PC-3 (cell line): ENCODE measurements at regions of chr3 and their contacts with region 1.

Region 1: GRCh38 chr3:123884203-123884831 is at the start of gene MYLK:
- DNase-seq: peak; percentile 85
- ATAC-seq: peak; percentile 92
- H3K4me3 ChIP-seq: peak within 1 kb of the TSS; percentile 81
- H3K27ac ChIP-seq: no peak within 1 kb of the TSS
- H3K4me1 ChIP-seq: peaks cover 8% of the 10 kb centered on the region
- H3K27me3 ChIP-seq: no peaks in the 10 kb centered on the region
- CTCF ChIP-seq: no peak
- total RNA-seq, gene MYLK: 6.9 and 8.7 TPM in 2 replicates

Region 2: GRCh38 chr3:123535580-123535979 is 348.7 kb before region 1 on chr3:
- CTCF ChIA-PET with region 1: no interaction called
- POLR2A ChIA-PET with region 1: no interaction called
- intact Hi-C with region 1: no loop called
- DNase-seq: peak; percentile 58
- ATAC-seq: peak; percentile 91
- H3K4me3 ChIP-seq: no peak overlapping the region
- H3K27ac ChIP-seq: no peak overlapping the region
- H3K4me1 ChIP-seq: peaks cover 15% of the 10 kb centered on the region
- H3K27me3 ChIP-seq: no peaks in the 10 kb centered on the region
- CTCF ChIP-seq: no peak

Region 3: DNA sequence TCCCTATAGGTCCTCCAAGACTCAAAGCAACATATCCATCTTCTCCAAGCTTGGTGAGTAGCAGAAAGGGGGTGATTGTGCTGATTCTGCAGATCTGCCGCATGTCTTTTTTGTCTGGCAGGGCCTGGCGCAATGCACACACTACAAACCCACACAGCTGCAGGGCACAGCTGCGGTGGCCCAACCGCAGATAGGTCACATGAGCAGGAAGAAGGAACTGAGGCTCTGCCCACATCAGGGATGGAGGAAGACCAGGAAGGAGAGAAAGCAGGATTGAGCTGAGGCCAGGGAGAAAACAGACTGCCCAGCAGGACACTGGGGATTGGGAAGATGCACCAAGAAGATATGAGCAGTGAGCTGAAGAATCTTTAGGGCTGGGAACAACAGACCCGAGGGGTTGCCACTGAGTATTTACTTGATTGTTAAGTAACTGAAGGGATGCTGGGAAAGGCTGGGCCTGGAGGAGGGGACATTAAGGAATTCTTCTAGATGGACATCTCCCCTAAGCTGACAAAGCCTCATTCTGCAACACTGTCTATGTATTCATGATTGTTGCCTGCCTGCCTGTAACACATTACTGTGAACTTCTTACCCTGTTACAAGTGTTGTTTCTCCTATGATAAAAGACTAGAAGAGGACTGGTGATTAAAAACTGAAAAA is 126.9 kb before region 1 on chr3:
- CTCF ChIA-PET with region 1: no interaction called
- POLR2A ChIA-PET with region 1: no interaction called
- intact Hi-C with region 1: loop called (anchors 5 kb)
- DNase-seq: no peak
- ATAC-seq: peak; percentile 7
- H3K4me3 ChIP-seq: no peak overlapping the region
- H3K27ac ChIP-seq: no peak overlapping the region
- H3K4me1 ChIP-seq: peaks cover 26% of the 10 kb centered on the region
- H3K27me3 ChIP-seq: no peaks in the 10 kb centered on the region
- CTCF ChIP-seq: no peak

Region 4: DNA sequence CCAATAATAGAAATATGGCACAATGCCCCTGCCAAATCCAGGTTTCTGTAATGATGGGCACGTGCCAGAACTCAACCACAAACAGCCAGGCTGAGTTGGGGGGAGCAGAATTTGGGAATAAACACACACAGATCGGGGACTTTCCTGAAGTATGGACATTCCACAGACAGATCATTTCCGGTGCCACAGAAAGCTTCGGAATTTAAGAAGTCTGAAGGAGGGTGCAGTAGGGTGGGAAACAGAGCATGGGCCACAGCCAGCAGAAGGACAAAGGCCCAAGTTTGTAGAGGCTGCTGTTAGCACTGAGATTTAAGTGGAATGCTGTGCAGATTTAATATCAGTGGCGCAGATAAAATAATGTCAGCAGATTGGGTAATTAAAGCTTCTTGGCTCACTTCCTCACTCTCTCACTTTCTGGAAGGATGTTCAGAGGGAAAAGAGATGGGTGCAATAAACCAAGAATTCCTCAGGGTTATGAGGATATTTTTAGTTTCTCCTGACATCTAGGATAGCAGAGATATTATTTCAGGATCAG is 67.6 kb before region 1 on chr3:
- CTCF ChIA-PET with region 1: no interaction called
- POLR2A ChIA-PET with region 1: no interaction called
- intact Hi-C with region 1: no loop called
- DNase-seq: no peak
- ATAC-seq: no peak
- H3K4me3 ChIP-seq: no peak overlapping the region
- H3K27ac ChIP-seq: no peak overlapping the region
- H3K4me1 ChIP-seq: peaks cover 12% of the 10 kb centered on the region
- H3K27me3 ChIP-seq: no peaks in the 10 kb centered on the region
- CTCF ChIP-seq: no peak

Region 5: GRCh38 chr3:123899300-123899865 is 15.1 kb after region 1 on chr3:
- CTCF ChIA-PET with region 1: no interaction called
- POLR2A ChIA-PET with region 1: no interaction called
- intact Hi-C with region 1: no loop called
- DNase-seq: peak; percentile 43
- ATAC-seq: no peak
- H3K4me3 ChIP-seq: no peak overlapping the region
- H3K27ac ChIP-seq: no peak overlapping the region
- H3K4me1 ChIP-seq: peaks cover 5% of the 10 kb centered on the region; the same call in 1 of the 2 replicates
- H3K27me3 ChIP-seq: no peaks in the 10 kb centered on the region
- CTCF ChIP-seq: no peak

Region 6: DNA sequence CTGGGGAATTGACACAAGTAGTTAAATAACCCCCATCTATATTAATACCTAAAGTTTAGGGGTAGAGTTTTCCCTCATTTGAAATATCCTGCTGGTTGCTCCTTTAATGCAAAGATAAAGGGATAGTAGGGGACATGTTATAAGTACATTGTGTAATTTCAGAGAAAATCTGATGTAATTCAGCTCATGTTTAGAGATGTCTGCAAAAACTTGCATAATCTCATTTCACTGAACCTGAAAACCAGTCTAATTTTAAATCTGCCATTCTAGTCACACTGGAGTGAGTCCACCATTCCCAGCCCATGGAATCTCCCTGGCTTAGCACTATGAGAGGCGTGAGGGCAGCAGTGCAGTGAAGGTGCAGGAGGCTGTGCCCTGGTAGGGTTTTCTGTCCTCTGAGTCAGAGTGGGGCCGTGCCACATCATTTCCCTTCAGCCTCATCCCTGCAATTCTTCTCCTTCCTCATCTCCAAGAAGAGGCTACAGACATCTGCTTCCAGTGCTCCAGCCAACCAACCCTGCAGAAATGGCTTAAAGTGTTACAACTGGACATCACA is 599.7 kb after region 1 on chr3:
- CTCF ChIA-PET with region 1: no interaction called
- POLR2A ChIA-PET with region 1: no interaction called
- intact Hi-C with region 1: no loop called
- DNase-seq: no peak
- ATAC-seq: no peak
- H3K4me3 ChIP-seq: no peak overlapping the region
- H3K27ac ChIP-seq: no peak overlapping the region
- H3K4me1 ChIP-seq: no peaks in the 10 kb centered on the region
- H3K27me3 ChIP-seq: peaks cover 16% of the 10 kb centered on the region
- CTCF ChIP-seq: no peak